ENCODE measurements at regions of chr4 and their contacts with region 1.

Region 1: GRCh38 chr4:71229477-71230270 is 109.1 kb upstream of the SLC4A4 start:
- DNase-seq: no peak
- ATAC-seq: no peak
- H3K4me3 ChIP-seq: no peak overlapping the region
- H3K4me3 Mint-ChIP-seq: no peak overlapping the region
- H3K27ac ChIP-seq: no peak overlapping the region
- H3K27ac Mint-ChIP-seq: no peak overlapping the region
- H3K4me1 ChIP-seq: no peaks in the 10 kb centered on the region
- H3K4me1 Mint-ChIP-seq: no peaks in the 10 kb centered on the region
- H3K27me3 ChIP-seq: no peaks in the 10 kb centered on the region
- H3K27me3 Mint-ChIP-seq: peaks cover 6 to 21% (median 10%) of the 10 kb centered on the region in 5 donors

Region 2: GRCh38 chr4:71211748-71212147 is 17.9 kb before region 1 on chr4:
- CTCF ChIA-PET with region 1: no interaction called
- POLR2A ChIA-PET with region 1: no interaction called
- intact Hi-C with region 1: no loop called
- DNase-seq: no peak
- ATAC-seq: no peak
- H3K4me3 ChIP-seq: no peak overlapping the region
- H3K4me3 Mint-ChIP-seq: no peak overlapping the region
- H3K27ac ChIP-seq: no peak overlapping the region
- H3K27ac Mint-ChIP-seq: no peak overlapping the region
- H3K4me1 ChIP-seq: no peaks in the 10 kb centered on the region
- H3K4me1 Mint-ChIP-seq: peaks cover 0 to 1% (median 0%) of the 10 kb centered on the region in 7 donors
- H3K27me3 ChIP-seq: no peaks in the 10 kb centered on the region
- H3K27me3 Mint-ChIP-seq: peaks cover 0 to 14% (median 6%) of the 10 kb centered on the region in 5 donors

Region 3: GRCh38 chr4:71498002-71498401 is 268.3 kb after region 1 on chr4:
- CTCF ChIA-PET with region 1: no interaction called
- POLR2A ChIA-PET with region 1: no interaction called
- intact Hi-C with region 1: no loop called
- DNase-seq: no peak
- ATAC-seq: no peak
- H3K4me3 ChIP-seq: no peak overlapping the region
- H3K4me3 Mint-ChIP-seq: no peak overlapping the region
- H3K27ac ChIP-seq: no peak overlapping the region
- H3K27ac Mint-ChIP-seq: no peak overlapping the region
- H3K4me1 ChIP-seq: no peaks in the 10 kb centered on the region
- H3K4me1 Mint-ChIP-seq: no peaks in the 10 kb centered on the region
- H3K27me3 ChIP-seq: no peaks in the 10 kb centered on the region
- H3K27me3 Mint-ChIP-seq: peaks cover 0 to 7% (median 0%) of the 10 kb centered on the region in 5 donors

Region 4: DNA sequence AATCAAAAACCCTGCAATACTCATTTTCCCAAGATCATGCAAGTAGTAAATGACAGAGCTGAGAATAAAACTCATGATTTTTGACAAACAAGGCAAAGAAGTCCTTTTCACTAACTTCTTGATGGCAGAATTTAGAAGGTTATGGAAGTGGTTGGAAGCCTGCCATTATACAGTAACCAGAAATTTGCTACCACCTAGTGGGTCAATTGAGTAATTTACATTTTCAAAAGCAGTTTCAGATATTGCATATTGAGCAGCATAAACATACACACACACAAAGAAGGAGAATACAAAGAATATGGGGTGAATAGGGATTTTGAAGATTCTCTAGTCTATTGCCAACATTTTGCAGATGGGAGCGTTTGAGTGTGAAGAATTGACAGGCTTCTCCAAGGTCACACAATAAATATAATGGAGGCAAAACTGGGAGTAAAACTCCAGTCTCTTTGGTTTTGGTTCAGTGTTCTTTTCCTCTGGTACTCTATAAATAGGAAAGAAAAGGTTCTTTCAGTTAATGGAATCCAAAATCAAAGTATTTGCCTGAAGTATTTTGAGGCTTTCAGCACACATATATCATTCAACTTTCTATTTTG is 484.0 kb after region 1 on chr4:
- CTCF ChIA-PET with region 1: no interaction called
- POLR2A ChIA-PET with region 1: no interaction called
- intact Hi-C with region 1: loop called in 1 of 2 experiments (anchors 1 kb)
- DNase-seq: peak in 5 of 9 donors; percentile 7 to 33 (median 10)
- ATAC-seq: no peak
- H3K4me3 ChIP-seq: no peak overlapping the region
- H3K4me3 Mint-ChIP-seq: no peak overlapping the region
- H3K27ac ChIP-seq: no peak overlapping the region
- H3K27ac Mint-ChIP-seq: no peak overlapping the region
- H3K4me1 ChIP-seq: no peaks in the 10 kb centered on the region
- H3K4me1 Mint-ChIP-seq: no peaks in the 10 kb centered on the region
- H3K27me3 ChIP-seq: no peaks in the 10 kb centered on the region
- H3K27me3 Mint-ChIP-seq: no peaks in the 10 kb centered on the region